Activated naive CD4-positive, alpha-beta T cell treated with anti-CD3 and anti-CD28 coated beads for 36 hours (primary cell): ENCODE measurements at regions of chr6 and their contacts with region 1.

Region 1: GRCh38 chr6:136643850-136644596 is 93.8 kb upstream of the MAP7 start:
- DNase-seq: peak; percentile 93
- H3K4me3 Mint-ChIP-seq: no peak overlapping the region
- H3K27ac Mint-ChIP-seq: no peak overlapping the region
- H3K4me1 Mint-ChIP-seq: no peaks in the 10 kb centered on the region
- H3K27me3 Mint-ChIP-seq: no peaks in the 10 kb centered on the region

Region 2: DNA sequence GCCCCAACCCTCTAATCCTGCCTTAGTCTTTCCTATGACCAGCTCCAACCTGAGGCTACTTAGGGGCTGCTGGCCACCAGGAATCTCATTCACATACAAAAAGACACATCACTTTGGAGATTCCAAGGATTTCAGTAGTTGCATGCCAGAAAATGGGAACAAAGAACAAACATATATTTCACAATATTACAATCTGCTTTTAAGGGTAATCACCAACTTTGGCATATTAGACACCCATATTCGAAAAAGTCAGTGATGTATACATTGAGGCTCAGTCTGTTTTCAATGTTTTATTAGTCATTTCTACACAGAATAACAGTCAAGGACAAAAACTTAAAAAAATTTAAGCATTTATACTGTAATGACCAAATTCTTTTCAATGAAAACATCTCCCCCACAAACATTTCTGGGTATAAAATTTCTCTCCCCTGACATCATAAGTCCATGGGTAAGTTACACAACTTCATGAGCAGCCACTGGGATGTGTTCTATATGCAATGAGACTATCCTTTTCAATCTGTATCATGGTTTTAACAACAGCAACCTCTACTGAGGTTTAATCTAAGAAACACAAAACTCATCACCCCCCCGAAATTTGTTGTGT is 197.3 kb before region 1 on chr6:
- CTCF ChIA-PET with region 1: no interaction called
- intact Hi-C with region 1: no loop called
- DNase-seq: no peak
- H3K4me3 Mint-ChIP-seq: no peak overlapping the region
- H3K27ac Mint-ChIP-seq: no peak overlapping the region
- H3K4me1 Mint-ChIP-seq: no peaks in the 10 kb centered on the region
- H3K27me3 Mint-ChIP-seq: no peaks in the 10 kb centered on the region

Region 3: DNA sequence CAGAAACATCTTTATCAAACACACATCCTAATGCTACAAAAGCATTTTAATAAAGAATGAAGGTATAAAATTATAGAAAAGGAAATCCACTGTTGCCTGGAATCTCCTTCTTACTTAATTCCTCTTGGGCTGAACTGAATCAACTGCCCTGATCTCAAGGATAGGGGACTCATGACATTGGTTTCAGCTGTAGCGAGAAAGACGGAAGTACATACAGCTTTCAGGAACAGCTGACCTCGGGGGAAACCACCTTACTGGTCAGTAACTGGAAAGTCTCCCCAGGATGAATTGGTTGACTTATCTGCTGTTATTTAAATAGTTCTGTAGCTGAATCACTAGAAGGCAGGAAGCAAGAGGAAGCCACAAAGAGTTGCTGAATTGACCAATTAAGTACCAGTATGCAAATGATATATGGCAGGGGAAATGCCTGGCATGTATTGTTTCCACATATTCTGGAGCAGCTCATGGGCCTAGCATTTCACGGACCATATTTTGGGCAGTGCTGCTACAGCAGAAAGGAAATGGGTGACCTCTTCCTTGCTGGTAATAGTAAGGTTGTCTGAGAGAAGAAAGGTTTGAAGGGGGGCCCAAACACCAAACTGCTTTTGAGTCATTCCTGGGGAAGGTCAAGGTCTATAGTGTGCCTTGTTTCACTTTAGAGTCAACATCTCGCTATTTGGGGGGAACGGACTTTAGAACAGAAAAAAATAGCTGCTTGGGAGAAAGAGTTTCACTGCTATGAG is 50.1 kb before region 1 on chr6:
- CTCF ChIA-PET with region 1: interaction called, 3 read pairs
- intact Hi-C with region 1: loop called (anchors 1 kb)
- DNase-seq: peak; percentile 79
- H3K4me3 Mint-ChIP-seq: peak overlapping the region; percentile 27
- H3K27ac Mint-ChIP-seq: peak overlapping the region; percentile 83
- H3K4me1 Mint-ChIP-seq: peaks cover 19% of the 10 kb centered on the region
- H3K27me3 Mint-ChIP-seq: no peaks in the 10 kb centered on the region

Region 4: DNA sequence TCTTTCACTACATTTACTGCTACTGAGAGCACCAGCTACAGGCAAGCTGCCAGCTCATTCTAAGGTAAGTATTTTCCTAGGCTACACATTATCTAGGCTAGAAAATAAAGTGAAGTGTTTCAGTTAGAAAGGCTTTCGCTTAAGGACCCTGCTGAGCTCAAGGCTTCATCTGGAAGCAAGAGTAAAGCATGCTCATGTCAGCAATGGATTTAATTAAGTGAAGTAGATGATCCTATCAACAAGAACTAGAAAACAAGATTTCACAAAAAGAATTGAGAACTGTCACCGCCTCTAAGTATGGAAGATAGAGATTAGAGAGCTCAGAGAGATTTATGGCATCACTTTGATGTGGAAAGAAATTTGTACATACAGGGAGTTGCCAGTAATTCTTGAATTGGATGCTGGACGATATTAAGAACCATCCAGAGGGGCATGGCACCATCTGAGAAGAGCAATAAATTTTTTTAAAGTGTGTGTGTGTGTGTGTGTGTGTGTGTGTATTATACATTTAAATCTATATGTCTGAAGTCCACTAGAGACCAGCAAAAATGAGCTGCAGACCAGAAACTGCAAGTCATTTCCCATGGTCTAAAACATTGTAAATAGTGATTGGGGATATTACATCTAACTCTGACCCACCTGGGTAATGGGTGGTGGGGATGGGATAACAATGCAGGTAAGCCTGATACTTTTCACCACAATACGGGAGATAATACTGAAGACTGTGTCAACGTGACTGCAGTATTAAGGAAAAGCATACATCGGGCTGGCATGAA is 11.4 kb after region 1 on chr6:
- CTCF ChIA-PET with region 1: interaction called, 13 read pairs
- intact Hi-C with region 1: no loop called
- DNase-seq: no peak
- H3K4me3 Mint-ChIP-seq: no peak overlapping the region
- H3K27ac Mint-ChIP-seq: no peak overlapping the region
- H3K4me1 Mint-ChIP-seq: no peaks in the 10 kb centered on the region
- H3K27me3 Mint-ChIP-seq: no peaks in the 10 kb centered on the region

Region 5: GRCh38 chr6:136761227-136761922 is 117.4 kb after region 1 on chr6:
- CTCF ChIA-PET with region 1: interaction called, 11 read pairs
- intact Hi-C with region 1: no loop called
- DNase-seq: no peak
- H3K4me3 Mint-ChIP-seq: peak overlapping the region; percentile 5
- H3K27ac Mint-ChIP-seq: no peak overlapping the region
- H3K4me1 Mint-ChIP-seq: peaks cover 60% of the 10 kb centered on the region
- H3K27me3 Mint-ChIP-seq: no peaks in the 10 kb centered on the region

Region 6: GRCh38 chr6:136822376-136823127 is 178.5 kb after region 1 on chr6 and contains the start of gene PEX7:
- CTCF ChIA-PET with region 1: interaction called, 7 read pairs
- intact Hi-C with region 1: loop called (anchors 1 kb)
- DNase-seq: peak; percentile 92
- H3K4me3 Mint-ChIP-seq: peak within 1 kb of the TSS; percentile 90
- H3K27ac Mint-ChIP-seq: peak within 1 kb of the TSS; percentile 92
- H3K4me1 Mint-ChIP-seq: peaks cover 19% of the 10 kb centered on the region
- H3K27me3 Mint-ChIP-seq: no peaks in the 10 kb centered on the region
- total RNA-seq, gene PEX7: 6.0 to 6.4 TPM

Region 7: GRCh38 chr6:138073264-138073663 is 1429.2 kb after region 1 on chr6:
- CTCF ChIA-PET with region 1: no interaction called
- intact Hi-C with region 1: no loop called
- DNase-seq: no peak
- H3K4me3 Mint-ChIP-seq: no peak overlapping the region
- H3K27ac Mint-ChIP-seq: no peak overlapping the region
- H3K4me1 Mint-ChIP-seq: no peaks in the 10 kb centered on the region
- H3K27me3 Mint-ChIP-seq: peaks cover 16% of the 10 kb centered on the region